Left cardiac atrium (tissue), 4 donors: ENCODE measurements at regions of chr6 and their contacts with region 1.

Region 1: DNA sequence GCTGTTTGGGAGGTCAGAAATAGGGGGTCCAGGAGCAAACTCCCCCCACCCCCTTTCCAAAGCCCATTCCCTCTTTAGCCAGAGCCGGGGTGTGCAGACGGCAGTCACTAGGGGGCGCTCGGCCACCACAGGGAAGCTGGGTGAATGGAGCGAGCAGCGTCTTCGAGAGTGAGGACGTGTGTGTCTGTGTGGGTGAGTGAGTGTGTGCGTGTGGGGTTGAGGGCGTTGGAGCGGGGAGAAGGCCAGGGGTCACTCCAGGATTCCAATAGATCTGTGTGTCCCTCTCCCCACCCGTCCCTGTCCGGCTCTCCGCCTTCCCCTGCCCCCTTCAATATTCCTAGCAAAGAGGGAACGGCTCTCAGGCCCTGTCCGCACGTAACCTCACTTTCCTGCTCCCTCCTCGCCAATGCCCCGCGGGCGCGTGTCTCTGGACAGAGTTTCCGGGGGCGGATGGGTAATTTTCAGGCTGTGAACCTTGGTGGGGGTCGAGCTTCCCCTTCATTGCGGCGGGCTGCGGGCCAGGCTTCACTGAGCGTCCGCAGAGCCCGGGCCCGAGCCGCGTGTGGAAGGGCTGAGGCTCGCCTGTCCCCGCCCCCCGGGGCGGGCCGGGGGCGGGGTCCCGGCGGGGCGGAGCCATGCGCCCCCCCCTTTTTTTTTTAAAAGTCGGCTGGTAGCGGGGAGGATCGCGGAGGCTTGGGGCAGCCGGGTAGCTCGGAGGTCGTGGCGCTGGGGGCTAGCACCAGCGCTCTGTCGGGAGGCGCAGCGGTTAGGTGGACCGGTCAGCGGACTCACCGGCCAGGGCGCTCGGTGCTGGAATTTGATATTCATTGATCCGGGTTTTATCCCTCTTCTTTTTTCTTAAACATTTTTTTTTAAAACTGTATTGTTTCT is at the start of gene VEGFA:
- DNase-seq: peak; percentile 92
- ATAC-seq: peak; percentile 70 to 77
- total RNA-seq, gene VEGFA: 168 to 212 TPM

Region 2: GRCh38 chr6:43667245-43668150 is 102.3 kb before region 1 on chr6:
- intact Hi-C with region 1: loop called (anchors 5 to 10 kb)
- DNase-seq: peak; percentile 70
- ATAC-seq: peak; percentile 60

Region 3: DNA sequence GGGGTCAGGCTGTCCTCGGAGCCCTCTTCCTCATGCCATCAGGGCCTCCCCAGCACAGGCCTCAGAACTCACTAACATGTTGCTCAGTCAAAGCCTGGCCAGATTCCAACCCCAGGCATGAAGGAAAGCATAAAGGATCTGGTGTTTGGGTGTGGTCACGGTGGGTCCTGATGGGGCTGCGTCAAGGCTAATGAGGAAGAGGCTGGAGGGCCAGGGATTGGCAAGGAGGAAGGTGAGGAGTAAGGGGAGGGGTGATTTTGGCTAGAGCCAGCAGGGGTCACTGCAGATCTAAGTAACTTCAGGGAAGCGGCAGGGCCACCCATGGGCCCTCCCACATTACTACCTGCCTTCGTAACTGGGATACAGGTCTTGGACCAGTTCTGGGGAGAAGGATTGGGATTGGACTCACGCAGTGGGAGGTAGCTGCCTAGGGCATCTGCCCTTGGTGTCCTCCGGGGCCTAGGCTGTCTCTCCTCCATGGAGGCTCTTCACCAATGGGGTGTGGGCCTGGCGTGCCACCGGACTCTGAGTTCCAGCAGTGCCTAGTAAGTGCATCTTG is 46.0 kb before region 1 on chr6:
- intact Hi-C with region 1: loop called in 1 of 2 experiments (anchors 5 kb)
- DNase-seq: peak; percentile 62
- ATAC-seq: peak; percentile 80 to 85

Region 4: GRCh38 chr6:43951063-43951755 is 181.4 kb after region 1 on chr6:
- intact Hi-C with region 1: loop called (anchors 2 to 10 kb)
- DNase-seq: peak; percentile 58
- ATAC-seq: peak; percentile 72 to 76

Region 5: DNA sequence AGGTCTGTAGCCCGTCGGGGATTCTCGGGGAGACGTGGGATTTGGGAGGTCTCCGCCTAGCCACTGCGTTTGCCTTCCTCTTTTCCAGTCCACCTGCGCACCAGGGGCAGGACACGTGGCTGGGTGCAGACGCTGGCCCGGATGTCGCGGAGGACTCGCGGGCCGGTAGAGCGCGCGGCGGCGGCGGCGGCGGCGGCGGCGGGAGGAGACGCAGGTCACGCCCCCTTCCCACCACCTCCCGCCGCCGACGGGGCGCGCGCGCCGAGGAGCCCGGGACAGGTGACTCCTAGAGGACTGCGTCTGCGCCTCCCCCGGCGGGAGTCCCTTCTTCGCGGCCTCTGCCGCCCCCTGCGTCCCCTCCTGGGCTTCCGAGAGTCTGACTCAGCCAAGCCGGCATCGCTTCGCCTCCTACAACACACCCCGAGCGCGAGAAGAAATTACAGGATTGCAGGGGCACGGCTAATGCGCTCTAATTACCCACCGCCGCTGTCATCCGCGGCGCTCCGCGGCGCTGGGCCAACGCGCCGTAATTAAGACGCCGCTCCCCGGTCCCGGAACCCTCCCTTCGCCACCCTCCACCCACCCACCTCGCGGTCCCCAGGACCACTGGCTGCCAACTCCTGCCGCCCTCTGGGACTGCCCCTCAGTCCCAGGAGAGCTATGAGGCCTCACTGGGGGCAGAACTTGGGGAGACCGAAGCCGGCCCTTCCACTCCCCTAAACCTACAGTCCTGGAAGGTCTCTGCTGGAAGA is 233.0 kb after region 1 on chr6:
- intact Hi-C with region 1: loop called in 1 of 2 experiments (anchors 5 kb)
- DNase-seq: peak; percentile 57
- ATAC-seq: peak; percentile 54 to 69